CD4-positive, alpha-beta memory T cell (primary cell): ENCODE measurements at regions of chr21 and their contacts with region 1.

Region 1: DNA sequence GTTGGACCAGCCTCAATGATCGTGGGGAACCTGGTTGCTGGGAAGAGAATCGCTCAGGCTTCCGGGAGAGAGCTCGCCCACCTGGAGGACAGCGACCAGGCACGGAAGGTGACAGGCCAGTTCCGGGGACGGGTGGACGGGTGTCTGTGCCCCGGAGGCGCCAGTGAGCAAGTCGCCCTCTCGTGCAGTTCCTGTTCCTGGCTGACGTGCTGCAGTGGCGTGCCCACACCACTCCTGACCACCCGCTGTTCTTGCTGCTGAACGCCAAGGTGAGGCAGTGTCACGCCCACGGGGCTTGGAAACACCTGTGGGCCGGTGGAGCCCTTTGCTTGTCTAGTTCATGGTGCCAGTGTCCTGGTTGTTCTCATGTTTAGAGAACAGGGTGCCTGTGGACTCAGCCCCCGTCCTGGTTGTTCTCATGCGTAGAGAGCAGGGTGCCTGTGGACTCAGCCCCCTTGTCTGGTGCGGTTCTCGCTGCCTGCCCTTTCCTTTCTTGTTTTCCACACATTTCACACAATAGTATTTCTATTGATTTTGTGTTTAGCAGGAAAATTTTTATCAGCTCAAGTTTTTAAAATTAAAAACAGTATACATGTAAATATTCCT is 53.1 kb downstream of the S100B start:
- DNase-seq: peak in 4 of 5 donors; percentile 20 to 47 (median 28)
- H3K4me3 ChIP-seq: peak overlapping the region in 1 of 2 donors; percentile 27
- H3K4me3 Mint-ChIP-seq: peak overlapping the region; percentile 54 to 87 (median 74)
- H3K27ac ChIP-seq: peak overlapping the region; percentile 58
- H3K27ac Mint-ChIP-seq: peak overlapping the region; percentile 91 to 99 (median 98)
- H3K4me1 ChIP-seq: peaks cover 60% of the 10 kb centered on the region
- H3K4me1 Mint-ChIP-seq: peaks cover 44 to 82% (median 53%) of the 10 kb centered on the region in 4 donors
- H3K27me3 ChIP-seq: no peaks in the 10 kb centered on the region
- H3K27me3 Mint-ChIP-seq: no peaks in the 10 kb centered on the region

Region 2: DNA sequence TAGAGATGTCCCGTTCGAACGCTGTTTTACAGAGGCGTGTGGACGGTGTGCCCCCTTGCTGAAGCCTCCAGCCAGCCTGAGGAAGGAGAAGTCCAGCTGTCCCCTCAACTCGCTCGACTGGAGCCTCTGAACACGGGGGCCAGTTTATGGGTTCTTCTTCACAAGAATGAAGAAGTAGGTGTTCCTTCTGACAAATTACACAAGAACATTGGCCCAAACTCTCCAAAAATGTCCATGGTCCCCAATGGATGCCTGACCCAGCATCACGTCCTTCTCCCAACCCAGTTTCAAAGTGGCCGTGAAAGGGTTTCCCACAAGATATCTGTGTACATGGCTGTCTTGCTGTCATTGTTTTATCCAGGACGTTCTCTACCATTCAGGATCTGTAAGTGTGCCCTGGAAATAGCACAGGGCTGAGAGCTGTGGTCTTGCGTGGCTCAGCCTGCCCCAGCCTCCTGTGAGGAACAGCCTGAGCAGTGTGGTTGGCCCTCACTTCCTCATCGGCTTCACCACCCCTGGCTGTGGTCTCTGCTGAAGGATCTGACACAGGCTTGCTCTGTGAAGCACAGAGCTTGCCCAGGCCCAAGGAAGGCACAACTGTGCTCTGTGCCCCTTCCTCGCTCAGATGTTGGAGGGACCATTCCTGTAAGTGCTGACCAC is 54.2 kb after region 1 on chr21:
- CTCF ChIA-PET with region 1: interaction called, 3 read pairs
- POLR2A ChIA-PET with region 1: interaction called, 10 read pairs
- intact Hi-C with region 1: no loop called
- DNase-seq: peak; percentile 39 to 52 (median 42)
- H3K4me3 ChIP-seq: no peak overlapping the region
- H3K4me3 Mint-ChIP-seq: peak overlapping the region in 7 of 8 donors; percentile 51 to 85 (median 73)
- H3K27ac ChIP-seq: peak overlapping the region; percentile 1
- H3K27ac Mint-ChIP-seq: peak overlapping the region in 6 of 7 donors; percentile 11 to 92 (median 83)
- H3K4me1 ChIP-seq: peaks cover 24% of the 10 kb centered on the region
- H3K4me1 Mint-ChIP-seq: peaks cover 25 to 65% (median 33%) of the 10 kb centered on the region in 4 donors
- H3K27me3 ChIP-seq: no peaks in the 10 kb centered on the region
- H3K27me3 Mint-ChIP-seq: no peaks in the 10 kb centered on the region

Region 3: GRCh38 chr21:46622226-46622625 is 70.5 kb after region 1 on chr21:
- CTCF ChIA-PET with region 1: no interaction called
- POLR2A ChIA-PET with region 1: interaction called, 14 read pairs
- intact Hi-C with region 1: no loop called
- DNase-seq: peak; percentile 61 to 79 (median 68)
- H3K4me3 ChIP-seq: no peak overlapping the region
- H3K4me3 Mint-ChIP-seq: peak overlapping the region in 7 of 8 donors; percentile 58 to 83 (median 72)
- H3K27ac ChIP-seq: peak overlapping the region; percentile 44
- H3K27ac Mint-ChIP-seq: peak overlapping the region; percentile 87 to 97 (median 93)
- H3K4me1 ChIP-seq: peaks cover 45% of the 10 kb centered on the region
- H3K4me1 Mint-ChIP-seq: peaks cover 28 to 72% (median 45%) of the 10 kb centered on the region in 4 donors
- H3K27me3 ChIP-seq: no peaks in the 10 kb centered on the region
- H3K27me3 Mint-ChIP-seq: peaks cover 0 to 2% of the 10 kb centered on the region in 2 donors